IMR-90 (cell line): ENCODE measurements at regions of chr9 and their contacts with region 1.

Region 1: GRCh38 chr9:11128156-11128555 is 515.4 kb upstream of the PTPRD start:
- DNase-seq: no peak
- ATAC-seq: no peak
- H3K4me3 ChIP-seq: no peak overlapping the region
- H3K27ac ChIP-seq: no peak overlapping the region
- H3K4me1 ChIP-seq: no peaks in the 10 kb centered on the region
- H3K27me3 ChIP-seq: no peaks in the 10 kb centered on the region
- CTCF ChIP-seq: no peak
- POLR2A ChIP-seq: no peak
- RAD21 ChIP-seq: no peak

Region 2: DNA sequence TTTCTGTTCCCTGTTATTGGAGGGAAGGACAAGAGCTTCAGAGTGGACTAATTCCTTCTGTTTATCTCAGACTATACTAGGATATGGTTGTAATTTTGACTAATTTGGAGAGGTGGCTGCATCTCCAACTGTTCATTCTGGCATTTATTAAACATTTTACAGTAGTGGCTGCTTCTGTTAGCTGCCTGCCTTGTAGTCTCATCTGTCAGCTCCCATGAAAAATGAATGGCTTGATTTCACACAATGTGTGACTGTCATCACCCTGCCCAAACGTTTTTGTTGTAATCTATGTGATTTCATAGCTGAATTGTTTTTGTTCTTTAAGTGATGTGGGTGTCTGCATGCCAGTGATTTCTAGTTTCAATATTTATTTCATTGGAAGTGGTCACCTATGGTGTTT is 56.0 kb before region 1 on chr9:
- CTCF ChIA-PET with region 1: no interaction called
- POLR2A ChIA-PET with region 1: no interaction called
- dilution Hi-C with region 1: no loop called
- in situ Hi-C with region 1: no loop called
- intact Hi-C with region 1: loop called (anchors 10 kb)
- DNase-seq: no peak
- ATAC-seq: no peak
- H3K4me3 ChIP-seq: no peak overlapping the region
- H3K27ac ChIP-seq: no peak overlapping the region
- H3K4me1 ChIP-seq: no peaks in the 10 kb centered on the region
- H3K27me3 ChIP-seq: no peaks in the 10 kb centered on the region
- CTCF ChIP-seq: no peak
- POLR2A ChIP-seq: no peak
- RAD21 ChIP-seq: no peak